Heart right ventricle (tissue), 16 donors: ENCODE measurements at regions of chr12 and their contacts with region 1.

Region 1: DNA sequence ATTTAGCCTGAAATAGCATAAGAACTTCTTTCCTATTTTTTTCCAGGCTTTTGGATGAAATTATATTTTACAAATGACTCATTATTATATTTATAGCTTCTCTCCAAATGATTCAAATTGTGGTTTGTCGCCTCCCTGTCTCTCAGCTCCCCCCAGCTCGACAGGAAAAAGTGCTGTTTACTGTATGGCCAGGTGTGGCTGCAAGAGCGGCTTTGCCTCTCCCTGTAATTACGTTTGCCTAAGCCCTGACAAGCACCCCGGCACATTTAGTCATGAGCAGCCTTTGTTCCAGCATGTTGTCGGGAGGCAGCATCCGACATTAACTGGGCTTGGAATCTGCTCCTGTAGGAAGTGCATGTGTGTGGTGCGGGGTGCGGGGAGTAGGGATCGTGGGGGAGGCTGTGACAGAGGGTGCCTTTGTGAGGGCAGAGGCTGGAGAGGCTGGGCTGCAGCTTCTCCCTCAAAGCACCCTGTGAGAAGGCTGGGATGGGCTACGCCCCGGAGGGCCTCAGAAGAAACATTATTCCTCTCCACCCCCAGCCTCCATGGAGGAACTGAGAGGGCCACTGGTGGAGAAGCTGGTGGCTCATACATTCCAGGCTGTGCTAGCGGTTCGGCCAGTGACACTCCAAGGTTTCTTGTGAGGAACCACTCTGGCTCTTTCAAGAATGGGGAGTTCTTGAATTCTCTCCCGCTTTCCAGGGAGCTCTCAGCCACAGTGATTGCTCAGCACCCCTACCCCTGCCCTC is 42.1 kb upstream of the CTDSP2 start:
- DNase-seq: peak in 1 of 2 donors; percentile 40
- ATAC-seq: peak in 7 of 8 donors; percentile 3 to 46 (median 24)
- H3K4me3 ChIP-seq: peak overlapping the region in 6 of 10 donors; percentile 22 to 42 (median 36)
- H3K27ac ChIP-seq: peak overlapping the region; percentile 64 to 100 (median 98)
- H3K4me1 ChIP-seq: peaks cover 25 to 71% (median 63%) of the 10 kb centered on the region in 9 donors
- H3K27me3 ChIP-seq: no peaks in the 10 kb centered on the region
- CTCF ChIP-seq: no peak

Region 2: DNA sequence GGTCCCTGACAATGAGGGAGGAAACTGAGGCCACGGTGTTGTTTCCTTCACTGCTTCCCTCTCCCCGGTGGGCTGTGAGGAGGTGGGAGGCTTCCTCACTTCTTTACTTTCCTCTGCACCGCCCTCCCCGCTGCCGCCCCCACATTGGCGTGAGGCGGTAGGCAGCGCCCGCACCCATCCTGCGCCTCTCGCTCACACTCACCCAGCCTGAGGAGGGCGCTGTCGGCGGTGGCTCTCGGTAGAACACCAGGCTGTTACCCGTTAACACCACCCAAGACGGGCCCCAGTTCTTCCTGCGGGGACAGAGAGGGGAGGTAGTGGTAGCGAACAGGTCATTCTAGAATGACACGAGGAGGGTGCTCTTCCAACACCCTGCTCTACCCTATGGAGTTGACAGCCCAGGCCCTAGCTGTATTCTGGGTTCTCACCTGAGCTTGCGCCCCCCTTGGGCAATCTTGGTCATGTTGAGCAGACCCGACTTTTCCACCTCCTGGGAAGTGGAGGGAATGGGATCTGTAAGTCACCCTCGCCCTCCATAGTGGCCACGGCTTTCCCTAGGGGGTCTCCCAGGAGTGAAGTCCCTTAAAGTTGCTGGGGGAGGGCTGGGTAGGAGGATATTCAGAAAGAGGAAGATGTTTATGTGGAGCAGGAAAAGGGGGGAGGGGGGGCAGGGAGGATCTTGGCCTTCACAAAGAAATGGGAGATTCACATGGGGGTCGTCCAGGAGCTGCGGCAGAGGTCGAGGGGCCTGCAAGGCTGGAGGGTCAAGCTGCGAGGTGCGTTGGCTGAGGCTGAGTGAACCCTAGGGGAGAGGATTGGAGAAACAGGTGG is 412.2 kb before region 1 on chr12:
- intact Hi-C with region 1: no loop called
- DNase-seq: no peak
- ATAC-seq: peak in 3 of 8 donors; percentile 6 to 28 (median 16)
- H3K4me3 ChIP-seq: peak overlapping the region in 9 of 10 donors; percentile 4 to 68 (median 45)
- H3K27ac ChIP-seq: peak overlapping the region in 5 of 10 donors; percentile 17 to 95 (median 35)
- H3K4me1 ChIP-seq: peaks cover 0 to 72% (median 16%) of the 10 kb centered on the region in 9 donors
- H3K27me3 ChIP-seq: peaks cover 9 to 85% (median 63%) of the 10 kb centered on the region in 7 donors
- CTCF ChIP-seq: peak in 3 of 9 donors; percentile 17 to 60 (median 20)

Region 3: DNA sequence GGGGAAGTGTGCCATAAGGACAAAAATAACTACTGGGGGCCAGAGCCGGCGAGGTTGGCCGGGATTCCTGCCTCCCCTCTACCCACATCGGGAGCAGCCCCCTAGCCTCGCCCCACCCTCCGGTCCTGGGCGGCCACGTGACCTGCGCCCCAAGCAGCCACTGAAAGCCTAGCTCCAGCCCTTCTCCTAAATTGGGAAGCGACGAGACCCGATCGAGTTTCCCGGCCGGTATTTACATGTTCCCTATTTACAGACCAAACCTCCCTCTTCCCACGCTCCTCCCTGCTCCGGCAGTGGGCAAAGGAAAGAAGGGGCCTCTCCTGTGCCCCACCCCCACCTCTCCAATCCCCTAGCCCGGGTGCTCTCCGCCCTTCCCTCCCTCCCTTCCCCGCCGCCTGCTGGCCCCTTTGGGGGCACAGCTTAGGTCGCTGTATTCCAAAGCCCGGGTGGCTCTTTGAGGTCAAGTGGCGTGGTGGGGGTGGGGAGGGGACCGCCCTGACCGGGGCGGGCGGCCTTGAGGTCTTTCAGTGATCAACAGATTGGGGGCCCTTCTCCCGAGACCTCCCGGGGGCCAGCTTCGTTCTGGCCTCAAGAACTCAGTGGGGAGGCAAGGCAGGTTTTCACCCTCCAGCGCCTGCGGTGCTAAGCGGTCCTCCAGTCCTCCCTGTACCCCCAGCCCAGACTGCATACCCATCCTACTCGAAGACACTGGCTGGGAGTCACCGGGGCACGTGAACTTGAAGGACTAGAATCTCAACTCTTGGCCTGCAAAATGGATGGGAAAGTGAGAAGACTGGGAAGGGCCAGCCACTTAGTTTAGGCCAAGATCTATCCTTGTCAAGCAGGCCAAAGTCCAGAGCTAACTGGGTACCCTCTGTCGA is 35.7 kb before region 1 on chr12:
- intact Hi-C with region 1: no loop called
- DNase-seq: peak; percentile 55 to 78
- ATAC-seq: peak; percentile 78 to 89 (median 84)
- H3K4me3 ChIP-seq: peak overlapping the region in 9 of 10 donors; percentile 30 to 59 (median 50)
- H3K27ac ChIP-seq: peak overlapping the region; percentile 32 to 91 (median 86)
- H3K4me1 ChIP-seq: peaks cover 0 to 51% (median 33%) of the 10 kb centered on the region in 9 donors
- H3K27me3 ChIP-seq: peaks cover 0 to 18% (median 0%) of the 10 kb centered on the region in 7 donors
- CTCF ChIP-seq: peak in 4 of 9 donors; percentile 15 to 45 (median 42)

Region 4: DNA sequence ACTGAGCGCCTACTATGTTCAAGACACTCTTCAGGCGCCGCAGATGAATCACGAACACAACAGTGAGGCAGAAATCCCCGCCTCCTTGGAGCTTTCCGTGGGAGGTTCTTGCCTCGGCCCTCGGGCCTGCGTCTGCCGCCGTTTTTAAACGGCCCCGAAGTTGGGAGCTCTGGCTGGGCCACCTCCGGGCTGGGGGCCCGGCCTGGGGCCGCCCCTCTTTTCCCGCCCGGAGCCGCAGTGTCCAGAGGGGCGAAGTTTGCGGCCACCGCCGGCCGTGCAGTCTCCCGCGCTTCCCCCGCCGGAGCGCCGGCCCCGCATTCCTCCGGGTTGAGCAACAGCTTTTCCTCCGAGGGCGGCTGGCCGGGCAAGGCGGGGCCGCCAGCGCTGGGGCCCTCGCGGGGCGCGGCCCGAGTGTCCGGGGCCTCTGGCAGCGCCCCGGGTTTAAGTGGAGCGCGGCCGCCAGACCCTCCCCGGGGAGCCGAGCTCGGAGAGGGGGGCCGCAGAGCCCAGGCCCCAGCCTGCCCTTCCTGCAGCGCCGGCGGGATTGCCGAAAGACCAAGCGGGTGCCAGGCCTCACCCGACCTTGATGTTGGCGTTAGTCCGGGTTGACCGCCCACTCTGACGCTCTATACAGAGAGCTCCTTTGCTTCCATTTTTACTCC is 23.4 kb before region 1 on chr12:
- intact Hi-C with region 1: loop called in 2 of 10 experiments (anchors 2 kb)
- DNase-seq: peak; percentile 77 to 84
- ATAC-seq: peak; percentile 86 to 94 (median 90)
- H3K4me3 ChIP-seq: peak overlapping the region; percentile 25 to 67 (median 58)
- H3K27ac ChIP-seq: peak overlapping the region; percentile 89 to 99 (median 96)
- H3K4me1 ChIP-seq: peaks cover 6 to 29% (median 19%) of the 10 kb centered on the region in 9 donors
- H3K27me3 ChIP-seq: no peaks in the 10 kb centered on the region
- CTCF ChIP-seq: peak in 1 of 9 donors; percentile 9

Region 5: DNA sequence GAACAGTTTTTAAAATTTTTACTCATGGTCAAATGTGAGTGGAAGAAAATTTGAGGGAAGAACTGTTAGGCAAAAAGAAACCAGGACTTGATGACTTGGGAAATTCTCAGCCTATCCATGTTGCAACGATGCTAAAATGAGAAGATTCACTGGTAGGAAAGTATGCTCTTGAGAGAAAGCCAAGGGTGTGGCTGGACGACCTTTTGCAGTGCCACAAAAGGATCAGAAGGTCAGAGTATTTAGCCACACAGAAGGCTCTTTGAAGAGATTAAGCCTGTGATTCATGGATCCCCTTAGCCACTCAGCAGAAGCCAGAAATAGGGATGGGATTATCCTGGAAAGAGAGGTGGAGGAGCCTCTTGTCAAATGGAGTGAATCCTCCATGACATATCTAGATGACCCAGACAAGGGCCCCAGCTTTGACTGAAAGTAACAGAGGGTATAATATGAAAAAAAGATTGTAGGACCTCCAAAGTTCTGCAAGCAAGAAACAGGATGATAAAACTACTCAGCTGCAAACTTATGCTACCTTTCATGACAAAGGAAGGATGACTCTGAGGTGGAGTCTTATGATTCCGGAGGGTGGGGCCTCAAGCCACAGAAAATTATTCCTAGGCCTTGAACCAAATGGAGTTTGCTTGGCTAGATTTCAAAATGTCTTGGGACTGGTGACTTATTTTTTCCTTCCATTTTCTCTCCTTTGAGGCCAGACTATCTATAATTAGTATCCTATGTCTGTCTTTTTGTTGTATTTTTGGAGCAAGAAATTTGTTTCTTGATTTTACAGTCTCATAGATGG is 695.2 kb after region 1 on chr12:
- intact Hi-C with region 1: no loop called
- DNase-seq: no peak
- ATAC-seq: peak in 3 of 8 donors; percentile 34 to 39 (median 38)
- H3K4me3 ChIP-seq: no peak overlapping the region
- H3K27ac ChIP-seq: no peak overlapping the region
- H3K4me1 ChIP-seq: peaks cover 0 to 18% (median 0%) of the 10 kb centered on the region in 9 donors
- H3K27me3 ChIP-seq: no peaks in the 10 kb centered on the region
- CTCF ChIP-seq: no peak